HepG2 (cell line): ENCODE measurements at regions of chr12 and their contacts with region 1.

Region 1: GRCh38 chr12:131011165-131012079 is 57.7 kb downstream of the ADGRD1 start:
- DNase-seq: no peak
- ATAC-seq: no peak; the same call in 2 of the 3 replicates
- H3K4me3 ChIP-seq: no peak overlapping the region
- H3K27ac ChIP-seq: peak overlapping the region; percentile 91
- H3K4me1 ChIP-seq: peaks cover 77% of the 10 kb centered on the region
- H3K27me3 ChIP-seq: no peaks in the 10 kb centered on the region
- CTCF ChIP-seq: no peak
- EP300 ChIP-seq: no peak
- POLR2A ChIP-seq: no peak
- RAD21 ChIP-seq: no peak

Region 2: DNA sequence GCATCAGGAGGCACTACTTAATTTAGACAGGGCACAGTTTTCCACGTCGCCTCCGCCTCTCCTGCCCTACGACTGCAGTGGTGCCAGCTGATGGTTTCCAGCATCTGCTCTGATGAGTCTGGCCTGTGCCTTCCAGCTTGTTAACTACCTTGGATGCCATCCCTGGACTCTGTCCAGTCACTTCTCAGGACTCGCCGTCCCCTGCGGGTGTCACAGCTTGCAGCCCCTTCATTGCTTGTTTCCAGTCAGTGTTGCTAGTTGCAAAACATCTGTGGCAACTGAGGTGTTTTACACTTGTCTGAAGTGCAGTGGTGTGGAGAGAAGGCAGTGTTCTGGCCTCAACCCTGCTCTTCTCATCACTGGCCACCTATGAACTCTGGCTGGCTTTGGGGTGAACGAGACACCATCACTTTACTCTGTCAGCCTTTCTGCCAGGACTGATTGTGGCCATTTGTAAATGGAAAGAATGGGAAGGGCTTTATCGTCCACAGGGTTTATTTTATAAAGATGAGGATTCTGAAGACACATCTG is 49.4 kb before region 1 on chr12:
- CTCF ChIA-PET with region 1: no interaction called
- POLR2A ChIA-PET with region 1: no interaction called
- in situ Hi-C with region 1: no loop called
- intact Hi-C with region 1: loop called (anchors 10 kb)
- DNase-seq: no peak
- ATAC-seq: no peak
- H3K4me3 ChIP-seq: no peak overlapping the region
- H3K27ac ChIP-seq: no peak overlapping the region
- H3K4me1 ChIP-seq: peaks cover 22% of the 10 kb centered on the region
- H3K27me3 ChIP-seq: no peaks in the 10 kb centered on the region
- CTCF ChIP-seq: no peak
- EP300 ChIP-seq: no peak
- POLR2A ChIP-seq: no peak
- RAD21 ChIP-seq: no peak

Region 3: GRCh38 chr12:130980939-130981742 is 30.3 kb before region 1 on chr12:
- CTCF ChIA-PET with region 1: no interaction called
- POLR2A ChIA-PET with region 1: interaction called, 10 read pairs
- in situ Hi-C with region 1: no loop called
- intact Hi-C with region 1: loop called (anchors 1 kb)
- DNase-seq: no peak
- ATAC-seq: no peak
- H3K4me3 ChIP-seq: no peak overlapping the region
- H3K27ac ChIP-seq: no peak overlapping the region
- H3K4me1 ChIP-seq: peaks cover 76% of the 10 kb centered on the region
- H3K27me3 ChIP-seq: no peaks in the 10 kb centered on the region
- CTCF ChIP-seq: no peak
- EP300 ChIP-seq: no peak
- POLR2A ChIP-seq: no peak
- RAD21 ChIP-seq: no peak